SK-N-SH (cell line): ENCODE measurements at regions of chr10 and their contacts with region 1.

Region 1: DNA sequence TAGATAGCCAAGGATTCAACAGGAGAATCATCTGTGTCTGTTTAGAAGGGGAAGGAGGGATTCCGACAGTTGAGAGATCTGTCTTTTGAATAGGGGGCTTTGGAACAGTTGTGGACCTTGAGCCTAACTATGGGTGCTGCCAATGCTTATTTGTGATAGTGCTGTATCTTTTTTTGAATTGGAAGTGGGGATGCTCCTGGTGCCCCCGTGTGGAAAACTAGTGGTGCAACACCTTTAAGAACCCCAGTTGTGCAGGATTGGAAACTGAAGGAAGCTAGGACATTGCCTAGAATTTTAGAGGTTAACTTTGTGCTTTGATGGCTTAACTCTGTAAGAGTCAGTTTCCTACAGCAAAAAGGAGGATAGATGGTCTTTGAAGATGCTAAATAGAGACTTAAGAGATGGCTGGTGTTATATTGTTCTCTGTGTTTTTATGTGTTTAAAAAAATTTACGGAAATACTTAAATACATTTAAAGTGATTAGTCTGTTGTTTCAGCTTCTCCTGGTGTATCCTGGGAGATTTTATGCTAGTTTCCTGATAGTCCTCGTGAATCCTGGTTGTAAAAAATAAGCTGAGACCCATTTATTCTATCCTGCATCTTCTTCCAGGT is 69.3 kb downstream of the AP3M1 start:
- DNase-seq: peak; percentile 70
- H3K4me3 ChIP-seq: no peak overlapping the region; a peak in 1 of 4 replicates
- H3K27ac ChIP-seq: peak overlapping the region; percentile 75 to 82; a peak in 3 of 4 replicates
- H3K4me1 ChIP-seq: peaks cover 2 to 57% of the 10 kb centered on the region in 2 experiments; a peak in 3 of 4 replicates
- H3K27me3 ChIP-seq: no peaks in the 10 kb centered on the region
- CTCF ChIP-seq: peak; percentile 85
- EP300 ChIP-seq: no peak
- RAD21 ChIP-seq: peak; percentile 83

Region 2: GRCh38 chr10:73855413-73855812 is 225.9 kb before region 1 on chr10:
- CTCF ChIA-PET with region 1: interaction called, 11 read pairs
- POLR2A ChIA-PET with region 1: no interaction called
- DNase-seq: no peak
- H3K4me3 ChIP-seq: no peak overlapping the region
- H3K27ac ChIP-seq: no peak overlapping the region
- H3K4me1 ChIP-seq: peaks cover 0 to 12% of the 10 kb centered on the region in 2 experiments; a peak in 1 of 4 replicates
- H3K27me3 ChIP-seq: no peaks in the 10 kb centered on the region
- CTCF ChIP-seq: no peak
- EP300 ChIP-seq: no peak
- RAD21 ChIP-seq: no peak

Region 3: DNA sequence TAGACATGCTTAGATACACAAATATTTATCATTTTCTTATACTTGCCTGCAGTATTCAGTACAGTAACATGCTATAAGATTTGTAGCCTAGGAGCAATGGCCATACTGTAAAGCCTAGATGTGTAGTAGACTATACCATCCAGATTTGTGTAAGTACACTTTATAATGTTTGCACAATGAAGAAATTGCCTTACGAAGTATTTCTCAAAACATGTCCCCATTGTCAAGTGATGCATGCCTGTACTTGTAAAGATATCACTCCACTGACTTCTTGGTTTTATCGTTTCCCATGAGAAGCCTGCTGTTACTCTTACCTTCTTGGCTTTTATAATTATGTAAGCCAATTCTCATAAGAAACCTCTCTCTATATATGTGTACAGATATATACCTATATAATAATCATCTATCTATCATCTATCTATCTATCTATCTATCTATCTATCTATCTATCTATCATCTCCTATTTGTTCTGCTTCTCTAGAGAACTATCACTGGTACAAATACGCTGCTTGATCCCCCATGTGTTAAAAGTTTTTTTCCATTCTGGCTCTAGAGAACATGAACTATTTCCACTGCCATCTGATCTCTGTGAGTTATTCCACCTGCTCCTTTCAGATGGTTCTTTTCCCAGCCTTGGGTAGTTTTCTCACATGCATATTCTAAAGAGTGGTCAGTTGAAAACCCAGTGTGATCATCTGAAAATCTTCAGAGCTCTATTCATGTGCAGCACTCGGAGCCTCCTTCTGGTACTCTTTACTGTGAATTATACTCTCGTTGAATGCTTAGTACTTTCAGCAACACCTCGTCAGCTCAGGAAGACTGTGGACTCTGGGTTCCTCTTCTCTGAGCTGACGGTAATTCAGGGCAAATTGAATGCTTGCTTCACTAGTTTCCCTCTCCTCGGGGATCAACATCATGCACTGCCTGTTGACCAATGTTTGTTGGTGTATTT is 97.9 kb before region 1 on chr10:
- CTCF ChIA-PET with region 1: no interaction called
- POLR2A ChIA-PET with region 1: no interaction called
- DNase-seq: no peak
- H3K4me3 ChIP-seq: no peak overlapping the region
- H3K27ac ChIP-seq: no peak overlapping the region
- H3K4me1 ChIP-seq: peaks cover 0 to 3% of the 10 kb centered on the region in 2 experiments; a peak in 1 of 4 replicates
- H3K27me3 ChIP-seq: no peaks in the 10 kb centered on the region
- CTCF ChIP-seq: no peak
- EP300 ChIP-seq: no peak
- RAD21 ChIP-seq: no peak

Region 4: DNA sequence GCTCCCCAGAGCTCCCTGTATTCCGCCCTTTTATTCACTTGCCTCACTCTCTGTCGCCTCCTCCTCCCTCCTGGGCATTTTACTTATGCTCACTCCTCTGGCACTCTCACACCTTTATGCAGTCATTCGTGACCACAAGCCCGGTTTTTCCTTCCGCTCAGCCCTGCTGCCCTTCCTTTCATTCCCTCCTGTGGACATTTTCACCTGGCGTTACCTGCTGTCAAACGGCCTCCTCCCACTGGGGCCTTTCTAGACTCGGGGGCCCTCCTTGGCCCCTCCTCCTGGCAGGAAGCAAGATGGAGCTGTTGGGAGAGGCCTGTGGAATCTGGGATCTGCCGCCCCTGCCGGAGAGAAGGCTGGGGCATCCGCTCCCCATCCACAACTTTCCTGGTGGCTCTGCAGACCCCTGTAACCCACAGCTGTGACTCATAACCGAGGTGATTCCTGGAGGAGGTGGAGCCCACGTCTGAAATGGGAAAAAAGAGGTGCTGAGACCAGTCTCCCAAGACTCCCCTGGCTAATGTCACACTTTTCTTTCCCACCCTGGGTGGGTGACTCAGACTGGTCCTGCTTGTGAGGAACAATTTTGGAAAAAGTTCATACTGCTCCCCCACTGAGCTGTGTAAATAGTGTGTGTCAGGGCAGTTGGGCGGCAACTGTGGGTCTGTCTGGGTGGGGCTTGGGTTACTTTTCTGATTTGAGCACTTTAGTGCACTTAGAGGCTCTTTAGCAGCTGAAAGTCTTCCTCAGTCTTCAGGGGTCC is 82.2 kb before region 1 on chr10:
- CTCF ChIA-PET with region 1: interaction called, 14 read pairs
- POLR2A ChIA-PET with region 1: no interaction called
- DNase-seq: peak; percentile 70
- H3K4me3 ChIP-seq: peak overlapping the region; percentile 84 to 90
- H3K27ac ChIP-seq: peak overlapping the region; percentile 80 to 94
- H3K4me1 ChIP-seq: peaks cover 7 to 28% of the 10 kb centered on the region in 2 experiments; a peak in 2 of 4 replicates
- H3K27me3 ChIP-seq: no peaks in the 10 kb centered on the region
- CTCF ChIP-seq: peak; percentile 63
- EP300 ChIP-seq: 0 out of 4 replicates have a peak, but pooled peaks of 1 of the 2 experiments have one; percentile 45
- RAD21 ChIP-seq: peak; percentile 12; the same call in 1 of the 2 replicates

Region 5: GRCh38 chr10:74061104-74061503 is 20.2 kb before region 1 on chr10:
- CTCF ChIA-PET with region 1: interaction called, 12 read pairs
- POLR2A ChIA-PET with region 1: no interaction called
- DNase-seq: no peak
- H3K4me3 ChIP-seq: no peak overlapping the region
- H3K27ac ChIP-seq: peak overlapping the region; percentile 60 to 64; a peak in 3 of 4 replicates
- H3K4me1 ChIP-seq: peaks cover 0 to 21% of the 10 kb centered on the region in 2 experiments; a peak in 2 of 4 replicates
- H3K27me3 ChIP-seq: no peaks in the 10 kb centered on the region
- CTCF ChIP-seq: no peak
- EP300 ChIP-seq: peak in 1 of 2 experiments; percentile 45; a peak in 1 of 4 replicates
- RAD21 ChIP-seq: no peak

Region 6: GRCh38 chr10:74103560-74104248 is 22.4 kb after region 1 on chr10:
- CTCF ChIA-PET with region 1: interaction called, 50 read pairs
- POLR2A ChIA-PET with region 1: no interaction called
- DNase-seq: peak; percentile 36
- H3K4me3 ChIP-seq: no peak overlapping the region
- H3K27ac ChIP-seq: no peak overlapping the region; a peak in 1 of 4 replicates
- H3K4me1 ChIP-seq: peaks cover 0 to 5% of the 10 kb centered on the region in 2 experiments; a peak in 1 of 4 replicates
- H3K27me3 ChIP-seq: no peaks in the 10 kb centered on the region
- CTCF ChIP-seq: peak; percentile 56
- EP300 ChIP-seq: no peak
- RAD21 ChIP-seq: peak; percentile 60

Region 7: DNA sequence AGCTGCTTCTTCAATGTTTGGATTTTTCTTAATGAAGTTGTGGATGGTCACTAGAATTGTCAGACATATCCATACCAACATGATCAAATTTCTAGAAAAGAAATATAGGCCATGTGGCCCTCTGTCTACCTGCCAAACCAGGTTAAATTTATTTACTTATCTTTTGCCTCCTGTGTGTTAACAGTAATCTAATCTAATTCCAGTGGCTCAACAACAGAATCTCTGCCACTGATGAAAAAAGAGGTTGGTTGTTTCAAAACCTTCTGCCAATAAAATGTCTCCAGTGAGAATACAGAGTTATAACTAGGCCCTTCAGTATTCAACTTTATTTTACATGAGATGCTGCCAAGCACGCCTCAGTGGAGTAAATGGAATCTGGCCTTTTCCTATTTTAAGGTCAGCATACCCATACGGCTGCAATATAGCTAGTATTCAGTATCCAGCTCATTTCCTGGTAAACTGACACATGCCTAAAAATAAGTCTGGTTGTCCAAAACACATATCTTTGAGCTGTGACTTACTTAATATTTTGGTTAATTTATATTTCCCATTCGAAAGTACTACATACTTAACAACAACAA is 53.0 kb after region 1 on chr10:
- CTCF ChIA-PET with region 1: no interaction called
- POLR2A ChIA-PET with region 1: no interaction called
- DNase-seq: no peak
- H3K4me3 ChIP-seq: no peak overlapping the region
- H3K27ac ChIP-seq: peak overlapping the region in 1 of 2 experiments; percentile 34; a peak in 2 of 4 replicates
- H3K4me1 ChIP-seq: peaks cover 0 to 3% of the 10 kb centered on the region in 2 experiments; a peak in 1 of 4 replicates
- H3K27me3 ChIP-seq: no peaks in the 10 kb centered on the region
- CTCF ChIP-seq: no peak
- EP300 ChIP-seq: no peak
- RAD21 ChIP-seq: no peak

Region 8: GRCh38 chr10:74189999-74190421 is 108.7 kb after region 1 on chr10:
- CTCF ChIA-PET with region 1: no interaction called
- POLR2A ChIA-PET with region 1: no interaction called
- DNase-seq: no peak
- H3K4me3 ChIP-seq: peak overlapping the region; percentile 10 to 27; a peak in 3 of 4 replicates
- H3K27ac ChIP-seq: peak overlapping the region; percentile 81 to 94
- H3K4me1 ChIP-seq: peaks cover 4 to 25% of the 10 kb centered on the region in 2 experiments; a peak in 3 of 4 replicates
- H3K27me3 ChIP-seq: no peaks in the 10 kb centered on the region
- CTCF ChIP-seq: no peak
- EP300 ChIP-seq: 0 out of 4 replicates have a peak, but pooled peaks have one; percentile 20 to 30
- RAD21 ChIP-seq: no peak

Region 9: GRCh38 chr10:74342991-74343390 is 261.7 kb after region 1 on chr10:
- CTCF ChIA-PET with region 1: no interaction called
- POLR2A ChIA-PET with region 1: no interaction called
- DNase-seq: no peak
- H3K4me3 ChIP-seq: no peak overlapping the region
- H3K27ac ChIP-seq: no peak overlapping the region
- H3K4me1 ChIP-seq: no peaks in the 10 kb centered on the region
- H3K27me3 ChIP-seq: no peaks in the 10 kb centered on the region
- CTCF ChIP-seq: no peak
- EP300 ChIP-seq: no peak
- RAD21 ChIP-seq: no peak